Heart right ventricle (tissue), 16 donors: ENCODE measurements at regions of chr6 and their contacts with region 1.

Region 1: DNA sequence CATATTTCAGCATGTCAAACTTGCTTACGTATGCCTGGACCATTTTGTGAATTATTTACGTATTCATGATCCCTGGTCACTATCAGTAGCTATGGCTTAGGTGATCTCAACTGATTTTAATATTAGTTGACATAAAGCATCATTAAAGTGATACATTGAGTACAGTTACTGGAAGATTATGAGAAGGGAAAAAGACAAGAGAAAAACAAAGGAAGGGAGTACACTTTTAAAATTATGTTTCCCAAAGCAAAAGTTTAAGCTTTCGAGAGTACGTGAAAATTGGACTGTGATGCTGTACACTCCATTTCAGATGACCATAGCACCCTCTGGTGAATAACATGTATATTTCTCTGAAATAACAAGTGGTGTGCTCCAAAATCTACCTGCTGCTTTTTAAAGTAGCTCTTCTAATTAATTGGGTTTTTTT is 215.0 kb upstream of the HSF2 start:
- DNase-seq: no peak
- ATAC-seq: peak in 7 of 8 donors; percentile 46 to 74 (median 70)
- H3K4me3 ChIP-seq: peak overlapping the region in 6 of 10 donors; percentile 11 to 35 (median 23)
- H3K27ac ChIP-seq: no peak overlapping the region
- H3K4me1 ChIP-seq: peaks cover 0 to 7% (median 0%) of the 10 kb centered on the region in 9 donors
- H3K27me3 ChIP-seq: no peaks in the 10 kb centered on the region
- CTCF ChIP-seq: peak in 8 of 9 donors; percentile 18 to 68 (median 54)

Region 2: GRCh38 chr6:121319112-121319553 is 865.3 kb before region 1 on chr6:
- intact Hi-C with region 1: loop called in 2 of 10 experiments (anchors 10 kb)
- DNase-seq: no peak
- ATAC-seq: peak in 2 of 8 donors; percentile 42 to 53
- H3K4me3 ChIP-seq: peak overlapping the region in 4 of 10 donors; percentile 11 to 37 (median 22)
- H3K27ac ChIP-seq: no peak overlapping the region
- H3K4me1 ChIP-seq: no peaks in the 10 kb centered on the region
- H3K27me3 ChIP-seq: no peaks in the 10 kb centered on the region
- CTCF ChIP-seq: peak; percentile 14 to 59 (median 48)

Region 3: GRCh38 chr6:121436960-121437850 is 747.2 kb before region 1 on chr6:
- intact Hi-C with region 1: loop called in 5 of 10 experiments (anchors 2 to 10 kb)
- DNase-seq: peak; percentile 50 to 53
- ATAC-seq: peak; percentile 56 to 72 (median 64)
- H3K4me3 ChIP-seq: peak overlapping the region; percentile 54 to 82 (median 72)
- H3K27ac ChIP-seq: peak overlapping the region; percentile 83 to 96 (median 90)
- H3K4me1 ChIP-seq: peaks cover 0 to 41% (median 18%) of the 10 kb centered on the region in 9 donors
- H3K27me3 ChIP-seq: peaks cover 0 to 35% (median 0%) of the 10 kb centered on the region in 7 donors
- CTCF ChIP-seq: no peak

Region 4: GRCh38 chr6:121849477-121849876 is 334.9 kb before region 1 on chr6:
- intact Hi-C with region 1: loop called in 6 of 10 experiments (anchors 5 to 10 kb)
- DNase-seq: peak in 1 of 2 donors; percentile 79
- ATAC-seq: peak; percentile 88 to 96 (median 92)
- H3K4me3 ChIP-seq: no peak overlapping the region
- H3K27ac ChIP-seq: peak overlapping the region in 3 of 10 donors; percentile 16 to 60 (median 29)
- H3K4me1 ChIP-seq: peaks cover 0 to 30% (median 16%) of the 10 kb centered on the region in 9 donors
- H3K27me3 ChIP-seq: no peaks in the 10 kb centered on the region
- CTCF ChIP-seq: peak; percentile 66 to 88 (median 75)

Region 5: DNA sequence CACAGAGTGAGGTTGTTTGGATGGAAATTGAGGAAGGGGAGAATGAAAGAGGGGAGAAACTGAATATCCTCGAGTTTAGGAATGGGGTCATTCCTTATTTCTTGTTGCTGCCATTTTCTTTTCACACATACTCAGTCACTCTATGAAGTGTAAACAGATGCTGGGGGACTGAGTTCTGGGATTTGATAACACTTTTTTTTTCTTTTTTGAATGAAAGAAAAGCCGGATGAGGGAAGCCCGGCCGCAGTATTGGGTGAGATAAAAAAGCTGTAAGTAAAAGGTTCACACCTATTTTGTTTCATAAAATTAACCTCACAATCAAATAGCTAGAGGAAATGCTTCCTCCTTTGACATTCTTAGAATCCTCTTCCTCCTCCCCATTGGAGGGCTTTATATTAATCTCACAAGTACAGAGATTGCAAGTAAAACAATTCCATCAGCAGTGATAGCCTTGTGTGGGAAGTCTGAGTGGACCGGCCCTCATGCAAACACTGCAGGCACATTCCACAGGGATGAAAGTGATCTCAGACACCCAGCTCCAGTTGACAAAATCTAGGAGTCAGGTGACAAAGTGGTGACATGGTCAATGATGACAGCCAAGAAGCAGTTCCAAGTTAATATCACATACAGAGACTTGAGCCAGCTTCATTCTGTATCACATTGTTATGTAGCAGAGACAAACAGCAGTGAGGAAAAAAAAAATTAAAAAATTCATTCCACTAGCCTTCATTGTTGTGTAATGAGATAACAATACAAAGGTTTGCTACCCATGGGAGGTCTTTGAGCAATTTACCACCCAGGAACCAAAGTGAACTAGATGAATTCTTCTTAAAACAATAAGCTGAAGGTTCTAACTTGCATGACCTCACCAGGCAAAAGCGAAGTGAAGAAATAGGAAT is 176.1 kb before region 1 on chr6:
- intact Hi-C with region 1: loop called in 1 of 10 experiments (anchors 5 kb)
- DNase-seq: peak; percentile 13 to 66
- ATAC-seq: peak; percentile 91 to 99 (median 97)
- H3K4me3 ChIP-seq: no peak overlapping the region
- H3K27ac ChIP-seq: peak overlapping the region; percentile 11 to 82 (median 68)
- H3K4me1 ChIP-seq: peaks cover 0 to 32% (median 12%) of the 10 kb centered on the region in 9 donors
- H3K27me3 ChIP-seq: no peaks in the 10 kb centered on the region
- CTCF ChIP-seq: no peak

Region 6: DNA sequence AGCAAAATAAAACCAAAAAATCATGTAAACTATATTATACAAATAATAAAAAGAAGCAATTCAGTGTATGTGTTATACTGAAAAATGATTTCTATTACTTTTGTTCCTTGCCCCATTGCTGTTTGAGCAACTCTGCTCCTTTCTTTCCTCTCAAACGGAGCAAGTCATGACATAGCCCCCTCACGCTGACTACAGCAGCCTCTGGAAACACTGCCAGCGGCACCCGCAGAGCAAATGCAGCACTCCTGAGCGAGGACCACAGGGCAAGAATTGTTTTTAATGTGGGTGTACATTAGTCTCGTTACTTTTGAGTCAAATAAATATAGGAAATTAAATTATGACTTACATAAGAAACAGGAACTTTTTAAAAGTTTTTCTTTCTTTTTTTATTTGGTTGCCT is 135.1 kb before region 1 on chr6:
- intact Hi-C with region 1: loop called in 2 of 10 experiments (anchors 10 kb)
- DNase-seq: peak in 1 of 2 donors; percentile 18
- ATAC-seq: peak in 4 of 8 donors; percentile 55 to 73 (median 60)
- H3K4me3 ChIP-seq: peak overlapping the region in 5 of 10 donors; percentile 3 to 25 (median 17)
- H3K27ac ChIP-seq: no peak overlapping the region
- H3K4me1 ChIP-seq: peaks cover 0 to 5% (median 0%) of the 10 kb centered on the region in 9 donors
- H3K27me3 ChIP-seq: no peaks in the 10 kb centered on the region
- CTCF ChIP-seq: no peak